ENCODE measurements at regions of chr11 and their contacts with region 1.

Region 1: GRCh38 chr11:62556108-62556871 is 9.7 kb upstream of the AHNAK start:
- DNase-seq: peak; percentile 81 to 88 (median 83)
- H3K4me3 ChIP-seq: no peak overlapping the region
- H3K27ac ChIP-seq: peak overlapping the region; percentile 2 to 68
- H3K4me1 ChIP-seq: peaks cover 35% of the 10 kb centered on the region
- H3K27me3 ChIP-seq: no peaks in the 10 kb centered on the region
- CTCF ChIP-seq: no peak
- EP300 ChIP-seq: no peak
- POLR2A ChIP-seq: no peak

Region 2: DNA sequence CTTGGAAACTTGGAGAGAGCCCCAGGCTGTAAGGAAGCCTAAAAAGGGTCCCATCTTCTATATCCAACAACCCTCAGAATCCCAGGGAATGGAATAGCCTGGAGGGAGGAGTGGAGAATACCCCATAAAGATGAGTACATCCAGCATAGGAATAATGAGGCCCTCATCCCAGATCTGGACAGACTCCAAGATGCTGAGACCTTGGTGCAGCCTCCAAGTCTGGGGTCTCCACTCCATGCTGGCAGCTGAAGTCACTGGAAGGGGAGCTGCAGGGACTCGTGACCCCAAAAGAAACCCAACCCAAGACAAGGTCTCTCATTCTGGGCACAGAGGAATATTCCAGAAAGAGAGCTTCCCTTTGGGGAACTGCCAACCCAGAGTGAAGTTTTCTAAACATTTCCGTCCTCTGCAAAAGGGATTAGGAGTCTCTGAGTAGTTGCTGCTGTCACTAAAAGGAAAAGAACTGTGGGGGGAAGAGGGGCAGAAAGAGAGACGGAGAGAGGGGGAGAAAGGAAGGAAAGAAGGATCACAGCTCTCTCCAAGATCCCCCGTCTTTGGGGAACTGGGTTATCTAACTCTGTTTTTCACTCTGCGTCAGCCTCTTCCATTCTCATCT is 136.9 kb before region 1 on chr11:
- intact Hi-C with region 1: loop called in 1 of 4 experiments (anchors 5 kb)
- DNase-seq: no peak
- H3K4me3 ChIP-seq: no peak overlapping the region
- H3K27ac ChIP-seq: peak overlapping the region; percentile 47 to 59
- H3K4me1 ChIP-seq: peaks cover 13% of the 10 kb centered on the region
- H3K27me3 ChIP-seq: no peaks in the 10 kb centered on the region
- CTCF ChIP-seq: no peak
- EP300 ChIP-seq: no peak
- POLR2A ChIP-seq: no peak

Region 3: GRCh38 chr11:63614136-63614664 is 1057.9 kb after region 1 on chr11 and contains the start of gene PLAAT3:
- intact Hi-C with region 1: loop called in 1 of 4 experiments (anchors 10 kb)
- DNase-seq: peak; percentile 70 to 82 (median 78)
- H3K4me3 ChIP-seq: peak within 1 kb of the TSS; percentile 61
- H3K27ac ChIP-seq: peak within 1 kb of the TSS; percentile 88 to 90
- H3K4me1 ChIP-seq: peaks cover 19% of the 10 kb centered on the region
- H3K27me3 ChIP-seq: no peaks in the 10 kb centered on the region
- CTCF ChIP-seq: no peak
- EP300 ChIP-seq: no peak
- POLR2A ChIP-seq: peak; percentile 72
- total RNA-seq, gene PLAAT3: 52.2 to 147 (median 110) TPM

Measured in ovary (tissue), 10 donors.